Transverse colon (tissue), 4 donors: ENCODE measurements at regions of chr5 and their contacts with region 1.

Region 1: DNA sequence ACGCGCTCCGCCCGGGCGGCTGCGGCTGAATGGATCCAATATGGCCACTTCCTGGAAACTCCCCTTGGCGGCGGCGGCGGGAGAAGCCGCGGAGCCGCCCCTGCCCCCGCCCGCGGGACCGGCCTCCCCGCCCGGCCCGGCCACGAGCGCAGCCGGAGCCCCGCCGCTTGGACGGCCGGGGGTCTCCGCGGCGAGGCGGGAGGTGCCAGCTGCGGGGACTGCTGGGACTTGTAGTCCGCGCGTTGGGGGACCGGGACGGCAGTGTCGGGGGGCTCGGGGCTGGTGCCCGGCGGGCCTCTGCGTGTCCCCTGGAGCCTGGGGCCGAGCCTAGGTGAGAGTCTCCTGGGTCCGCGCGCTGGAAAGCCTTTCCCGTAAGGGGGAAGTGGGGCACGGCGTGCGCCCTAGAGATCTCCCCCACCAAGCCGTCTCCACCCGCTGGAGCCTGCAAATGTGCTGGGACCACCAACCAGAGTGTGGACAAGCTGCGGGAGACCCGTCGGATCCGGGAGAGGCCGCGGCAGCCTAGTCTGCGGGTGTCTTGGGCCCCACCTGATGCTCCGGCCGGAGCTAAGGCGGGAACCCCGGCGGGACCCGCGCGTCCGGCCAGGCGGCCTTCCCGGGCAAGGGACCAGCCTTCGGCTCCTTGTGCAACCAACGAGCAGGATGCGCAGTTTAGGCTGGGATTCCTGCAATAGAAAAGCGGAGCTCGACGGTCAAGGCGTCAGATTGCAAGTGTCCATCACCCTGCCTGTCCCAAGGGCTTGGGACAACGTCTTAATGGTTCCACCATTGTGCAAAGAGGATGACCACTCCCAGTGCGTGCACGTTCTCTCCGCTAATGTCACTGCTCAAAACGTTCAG is at the start of gene SEPTIN8:
- DNase-seq: peak; percentile 59
- H3K4me3 ChIP-seq: peak within 1 kb of the TSS; percentile 83 to 94 (median 88)
- H3K27ac ChIP-seq: peak within 1 kb of the TSS; percentile 80 to 84 (median 83)
- H3K4me1 ChIP-seq: peaks cover 7 to 26% (median 21%) of the 10 kb centered on the region in 4 donors
- H3K27me3 ChIP-seq: no peaks in the 10 kb centered on the region
- CTCF ChIP-seq: peak in 1 of 5 experiments; percentile 1
- EP300 ChIP-seq: no peak
- POLR2A ChIP-seq: no peak
- total RNA-seq, gene SEPTIN8: 38.4 to 70.7 (median 53.5) TPM

Region 2: DNA sequence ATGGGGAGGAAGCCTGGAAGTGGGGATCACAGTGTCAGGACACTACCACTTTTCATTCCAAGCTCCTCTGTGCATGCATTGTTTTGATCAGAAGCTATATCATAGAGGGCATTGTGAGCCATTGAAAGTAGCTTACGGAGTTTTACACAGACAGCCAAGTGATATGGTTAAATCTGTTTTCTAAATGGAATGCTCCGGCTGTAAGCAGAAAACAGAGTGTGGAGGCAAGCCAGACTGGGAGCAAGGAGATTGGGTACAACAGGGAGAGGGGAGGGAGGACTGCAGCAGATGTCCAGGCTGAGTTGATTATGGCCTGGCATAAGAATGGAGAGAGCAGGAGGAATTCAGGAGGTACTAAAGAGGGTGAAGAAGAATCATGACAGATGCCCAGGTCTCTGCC is 20.2 kb after region 1 on chr5:
- in situ Hi-C with region 1: no loop called
- intact Hi-C with region 1: no loop called
- DNase-seq: no peak
- H3K4me3 ChIP-seq: no peak overlapping the region
- H3K27ac ChIP-seq: no peak overlapping the region
- H3K4me1 ChIP-seq: no peaks in the 10 kb centered on the region
- H3K27me3 ChIP-seq: no peaks in the 10 kb centered on the region
- CTCF ChIP-seq: no peak
- EP300 ChIP-seq: no peak
- POLR2A ChIP-seq: no peak

Region 3: DNA sequence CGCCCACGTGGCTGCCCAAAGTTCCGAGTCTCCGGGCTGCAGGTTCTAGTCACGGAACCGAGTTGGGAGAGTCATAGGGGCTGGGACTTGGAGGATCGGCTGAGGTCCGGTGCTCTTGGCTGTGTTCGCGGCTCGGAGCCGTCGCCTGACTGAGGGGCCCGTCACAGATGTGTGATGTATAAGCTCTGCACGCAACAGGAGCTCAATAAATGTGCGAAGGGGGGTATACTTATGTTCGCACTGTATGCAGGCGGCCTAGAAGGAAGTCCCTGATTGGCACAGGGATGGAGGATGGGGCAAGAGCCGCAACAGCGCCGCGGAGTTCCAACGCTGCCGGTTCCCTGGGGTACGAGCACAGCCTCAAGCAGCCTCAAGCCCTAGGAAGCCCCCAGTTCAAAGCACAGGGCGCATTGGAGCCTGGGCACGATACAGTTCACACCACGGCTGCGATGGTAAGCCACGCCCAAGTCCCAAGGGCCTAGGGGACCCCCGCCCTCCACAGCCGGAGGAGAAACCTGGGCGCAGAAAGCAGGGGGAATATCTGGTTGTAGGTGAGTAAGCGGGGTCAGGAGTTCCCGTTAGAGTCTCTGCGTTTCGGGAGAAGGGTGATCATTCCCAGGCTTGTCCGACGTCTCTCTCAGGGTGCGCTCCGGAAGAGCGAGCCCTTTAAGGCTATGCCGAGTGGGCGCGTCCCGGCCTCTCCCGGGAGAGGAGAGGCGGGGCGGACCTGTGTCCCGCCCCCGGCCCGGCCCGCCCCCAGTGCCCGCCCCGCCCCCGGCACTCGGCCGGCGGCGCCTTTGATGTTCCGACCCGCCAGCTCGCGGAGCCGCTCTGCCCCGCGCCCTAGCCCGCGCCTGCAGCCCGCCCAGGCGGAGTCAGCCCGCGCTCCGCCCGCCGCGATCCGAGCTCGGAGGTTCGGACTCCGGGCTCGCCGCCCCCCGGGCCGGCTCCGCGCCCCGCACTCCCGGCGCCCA is 1336.8 kb after region 1 on chr5 and contains the start of gene TCF7:
- in situ Hi-C with region 1: no loop called
- intact Hi-C with region 1: loop called (anchors 10 kb)
- DNase-seq: peak; percentile 86
- H3K4me3 ChIP-seq: peak within 1 kb of the TSS; percentile 41 to 72 (median 53)
- H3K27ac ChIP-seq: peak within 1 kb of the TSS; percentile 46 to 57 (median 53)
- H3K4me1 ChIP-seq: peaks cover 6 to 21% (median 14%) of the 10 kb centered on the region in 4 donors
- H3K27me3 ChIP-seq: peaks cover 27% of the 10 kb centered on the region
- CTCF ChIP-seq: no peak
- EP300 ChIP-seq: no peak
- POLR2A ChIP-seq: peak; percentile 34
- total RNA-seq, gene TCF7: 0.60 to 7.1 (median 3.1) TPM

Region 4: GRCh38 chr5:134394932-134395331 is 1617.5 kb after region 1 on chr5:
- in situ Hi-C with region 1: no loop called
- intact Hi-C with region 1: no loop called
- DNase-seq: no peak
- H3K4me3 ChIP-seq: no peak overlapping the region
- H3K27ac ChIP-seq: no peak overlapping the region
- H3K4me1 ChIP-seq: no peaks in the 10 kb centered on the region
- H3K27me3 ChIP-seq: no peaks in the 10 kb centered on the region
- CTCF ChIP-seq: no peak
- EP300 ChIP-seq: no peak
- POLR2A ChIP-seq: no peak